ENCODE measurements at regions of chr1 and their contacts with region 1.

Region 1: GRCh38 chr1:198359024-198359653 is 181.3 kb downstream of the ATP6V1G3 start:
- DNase-seq: no peak
- ATAC-seq: peak; percentile 70
- H3K4me3 ChIP-seq: no peak overlapping the region
- H3K27ac ChIP-seq: no peak overlapping the region
- H3K4me1 ChIP-seq: no peaks in the 10 kb centered on the region
- H3K27me3 ChIP-seq: no peaks in the 10 kb centered on the region
- CTCF ChIP-seq: peak; percentile 39 to 50 (median 45); a peak in 4 of 6 replicates
- EP300 ChIP-seq: no peak
- POLR2A ChIP-seq: no peak
- RAD21 ChIP-seq: peak; percentile 59

Region 2: GRCh38 chr1:198088360-198089071 is 270.6 kb before region 1 on chr1:
- CTCF ChIA-PET with region 1: interaction called, 16 read pairs
- POLR2A ChIA-PET with region 1: no interaction called
- RAD21 ChIA-PET with region 1: interaction called, 5 read pairs
- SMC1A ChIA-PET with region 1: interaction called, 10 read pairs
- in situ Hi-C with region 1: no loop called
- intact Hi-C with region 1: loop called (anchors 1 kb)
- DNase-seq: no peak
- ATAC-seq: peak; percentile 58
- H3K4me3 ChIP-seq: no peak overlapping the region
- H3K27ac ChIP-seq: no peak overlapping the region
- H3K4me1 ChIP-seq: no peaks in the 10 kb centered on the region
- H3K27me3 ChIP-seq: no peaks in the 10 kb centered on the region; a peak in 1 of 4 replicates
- CTCF ChIP-seq: peak; percentile 43 to 64 (median 48); a peak in 5 of 6 replicates
- EP300 ChIP-seq: no peak
- POLR2A ChIP-seq: no peak
- RAD21 ChIP-seq: peak; percentile 72

Region 3: GRCh38 chr1:198399452-198399851 is 40.3 kb after region 1 on chr1:
- CTCF ChIA-PET with region 1: no interaction called
- POLR2A ChIA-PET with region 1: no interaction called
- RAD21 ChIA-PET with region 1: no interaction called
- SMC1A ChIA-PET with region 1: no interaction called
- in situ Hi-C with region 1: no loop called
- intact Hi-C with region 1: no loop called
- DNase-seq: no peak
- ATAC-seq: no peak
- H3K4me3 ChIP-seq: no peak overlapping the region
- H3K27ac ChIP-seq: no peak overlapping the region
- H3K4me1 ChIP-seq: no peaks in the 10 kb centered on the region
- H3K27me3 ChIP-seq: no peaks in the 10 kb centered on the region; a peak in 1 of 4 replicates
- CTCF ChIP-seq: no peak
- EP300 ChIP-seq: no peak
- POLR2A ChIP-seq: no peak
- RAD21 ChIP-seq: no peak

Region 4: GRCh38 chr1:198598796-198599321 is 239.7 kb after region 1 on chr1:
- CTCF ChIA-PET with region 1: no interaction called
- POLR2A ChIA-PET with region 1: no interaction called
- RAD21 ChIA-PET with region 1: no interaction called
- SMC1A ChIA-PET with region 1: no interaction called
- in situ Hi-C with region 1: no loop called
- intact Hi-C with region 1: no loop called
- DNase-seq: peak; percentile 89
- ATAC-seq: peak; percentile 88
- H3K4me3 ChIP-seq: peak overlapping the region; percentile 24; the same call in 1 of the 2 replicates
- H3K27ac ChIP-seq: peak overlapping the region; percentile 81
- H3K4me1 ChIP-seq: peaks cover 27% of the 10 kb centered on the region
- H3K27me3 ChIP-seq: no peaks in the 10 kb centered on the region
- CTCF ChIP-seq: no peak
- EP300 ChIP-seq: peak; percentile 63 to 84; a peak in 3 of 4 replicates
- POLR2A ChIP-seq: no peak; the same call in 1 of the 2 replicates
- RAD21 ChIP-seq: no peak

Measured in GM12878 (cell line).